MCF 10A (cell line): ENCODE measurements at regions of chr1 and their contacts with region 1.

Region 1: GRCh38 chr1:225318706-225319575 is 108.9 kb downstream of the LBR start:
- DNase-seq: peak; percentile 85
- H3K4me3 Mint-ChIP-seq: no peak overlapping the region
- H3K27ac Mint-ChIP-seq: no peak overlapping the region
- H3K4me1 Mint-ChIP-seq: no peaks in the 10 kb centered on the region
- H3K27me3 Mint-ChIP-seq: no peaks in the 10 kb centered on the region
- CTCF ChIP-seq: peak; percentile 97

Region 2: DNA sequence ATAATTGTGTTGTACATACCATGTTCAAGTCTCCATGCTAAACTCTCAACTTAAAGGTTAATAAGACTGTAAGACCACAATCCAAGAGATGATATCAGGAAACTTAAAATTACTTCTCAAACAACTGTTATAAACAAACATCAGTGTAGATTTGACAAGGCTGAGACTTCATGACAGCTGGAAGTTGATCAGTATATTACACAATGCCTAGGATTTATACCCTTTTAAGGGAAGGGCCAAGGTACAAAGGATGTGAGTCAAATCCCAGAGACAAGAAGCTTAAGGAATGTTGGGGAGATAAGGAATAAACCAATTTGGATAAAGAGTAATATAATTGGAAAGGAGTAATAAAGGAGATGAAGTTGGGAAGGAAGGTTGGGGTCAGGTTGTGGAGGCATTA is 10.1 kb after region 1 on chr1:
- CTCF ChIA-PET with region 1: interaction called, 66 read pairs
- POLR2A ChIA-PET with region 1: interaction called, 7 read pairs
- intact Hi-C with region 1: no loop called
- DNase-seq: peak; percentile 48
- H3K4me3 Mint-ChIP-seq: no peak overlapping the region
- H3K27ac Mint-ChIP-seq: no peak overlapping the region
- H3K4me1 Mint-ChIP-seq: peaks cover 6% of the 10 kb centered on the region
- H3K27me3 Mint-ChIP-seq: no peaks in the 10 kb centered on the region
- CTCF ChIP-seq: no peak

Region 3: GRCh38 chr1:225349826-225350225 is 30.9 kb after region 1 on chr1:
- CTCF ChIA-PET with region 1: interaction called, 29 read pairs
- POLR2A ChIA-PET with region 1: interaction called, 4 read pairs
- intact Hi-C with region 1: no loop called
- DNase-seq: no peak
- H3K4me3 Mint-ChIP-seq: no peak overlapping the region
- H3K27ac Mint-ChIP-seq: peak overlapping the region; percentile 63
- H3K4me1 Mint-ChIP-seq: peaks cover 28% of the 10 kb centered on the region
- H3K27me3 Mint-ChIP-seq: no peaks in the 10 kb centered on the region
- CTCF ChIP-seq: no peak

Region 4: GRCh38 chr1:225378880-225379279 is 59.9 kb after region 1 on chr1:
- CTCF ChIA-PET with region 1: interaction called, 35 read pairs
- POLR2A ChIA-PET with region 1: interaction called, 3 read pairs
- intact Hi-C with region 1: no loop called
- DNase-seq: peak; percentile 83
- H3K4me3 Mint-ChIP-seq: no peak overlapping the region
- H3K27ac Mint-ChIP-seq: peak overlapping the region; percentile 21
- H3K4me1 Mint-ChIP-seq: peaks cover 6% of the 10 kb centered on the region
- H3K27me3 Mint-ChIP-seq: no peaks in the 10 kb centered on the region
- CTCF ChIP-seq: no peak

Region 5: DNA sequence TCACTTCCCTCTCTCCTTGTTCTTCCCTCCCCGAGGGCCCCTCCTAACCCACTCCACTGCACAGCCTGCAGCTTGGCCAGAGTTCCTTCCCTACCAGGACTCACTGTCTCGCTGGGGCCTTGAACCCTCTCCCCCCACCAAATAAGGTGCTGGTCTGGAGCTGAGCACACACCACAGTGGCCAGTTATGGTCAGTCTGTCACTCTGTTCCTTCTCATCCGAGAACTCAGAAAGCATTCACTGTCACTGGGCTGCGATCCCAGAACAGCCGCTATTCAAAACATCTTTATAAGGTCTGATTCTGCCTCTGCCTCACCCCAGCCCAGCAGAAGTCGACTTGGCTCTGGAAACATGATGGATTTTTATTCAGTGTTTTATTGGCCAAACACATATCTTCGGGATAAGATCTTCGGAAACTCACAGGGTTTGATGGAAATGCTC is 128.7 kb after region 1 on chr1:
- CTCF ChIA-PET with region 1: interaction called, 29 read pairs
- POLR2A ChIA-PET with region 1: interaction called, 7 read pairs
- intact Hi-C with region 1: no loop called
- DNase-seq: no peak
- H3K4me3 Mint-ChIP-seq: no peak overlapping the region
- H3K27ac Mint-ChIP-seq: peak overlapping the region; percentile 18
- H3K4me1 Mint-ChIP-seq: peaks cover 44% of the 10 kb centered on the region
- H3K27me3 Mint-ChIP-seq: no peaks in the 10 kb centered on the region
- CTCF ChIP-seq: no peak

Region 6: GRCh38 chr1:225567590-225568194 is 248.8 kb after region 1 on chr1:
- CTCF ChIA-PET with region 1: no interaction called
- POLR2A ChIA-PET with region 1: no interaction called
- intact Hi-C with region 1: no loop called
- DNase-seq: peak; percentile 44
- H3K4me3 Mint-ChIP-seq: no peak overlapping the region
- H3K27ac Mint-ChIP-seq: no peak overlapping the region
- H3K4me1 Mint-ChIP-seq: peaks cover 13% of the 10 kb centered on the region
- H3K27me3 Mint-ChIP-seq: no peaks in the 10 kb centered on the region
- CTCF ChIP-seq: peak; percentile 20

Region 7: DNA sequence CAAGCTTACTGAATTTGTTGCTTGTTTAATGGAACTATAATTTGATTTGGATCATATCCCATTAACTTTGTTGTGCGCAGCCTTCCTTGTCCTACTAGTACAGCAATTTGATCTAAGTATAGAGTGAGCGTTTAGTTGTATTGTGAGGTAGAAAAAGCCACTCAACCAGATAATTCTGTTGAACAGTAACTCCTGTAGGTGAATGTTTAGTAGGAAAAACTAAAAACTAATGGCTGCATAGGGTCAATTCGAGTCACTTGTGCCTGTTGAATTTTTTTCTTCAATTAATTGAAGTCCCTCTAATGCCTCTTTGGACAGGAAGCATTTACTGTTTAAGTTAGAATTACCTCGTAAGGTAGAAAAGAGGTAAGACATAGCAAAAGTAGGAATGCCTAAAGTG is 476.0 kb after region 1 on chr1:
- CTCF ChIA-PET with region 1: no interaction called
- POLR2A ChIA-PET with region 1: no interaction called
- intact Hi-C with region 1: no loop called
- DNase-seq: no peak
- H3K4me3 Mint-ChIP-seq: no peak overlapping the region
- H3K27ac Mint-ChIP-seq: no peak overlapping the region
- H3K4me1 Mint-ChIP-seq: no peaks in the 10 kb centered on the region
- H3K27me3 Mint-ChIP-seq: no peaks in the 10 kb centered on the region
- CTCF ChIP-seq: no peak

Region 8: GRCh38 chr1:225977937-225978748 is 659.2 kb after region 1 on chr1:
- CTCF ChIA-PET with region 1: interaction called, 7 read pairs
- POLR2A ChIA-PET with region 1: no interaction called
- intact Hi-C with region 1: loop called (anchors 1 kb)
- DNase-seq: no peak
- H3K4me3 Mint-ChIP-seq: no peak overlapping the region
- H3K27ac Mint-ChIP-seq: no peak overlapping the region
- H3K4me1 Mint-ChIP-seq: peaks cover 5% of the 10 kb centered on the region
- H3K27me3 Mint-ChIP-seq: no peaks in the 10 kb centered on the region
- CTCF ChIP-seq: no peak